Breast epithelium (tissue), 4 donors: ENCODE measurements at regions of chr4 and their contacts with region 1.

Region 1: DNA sequence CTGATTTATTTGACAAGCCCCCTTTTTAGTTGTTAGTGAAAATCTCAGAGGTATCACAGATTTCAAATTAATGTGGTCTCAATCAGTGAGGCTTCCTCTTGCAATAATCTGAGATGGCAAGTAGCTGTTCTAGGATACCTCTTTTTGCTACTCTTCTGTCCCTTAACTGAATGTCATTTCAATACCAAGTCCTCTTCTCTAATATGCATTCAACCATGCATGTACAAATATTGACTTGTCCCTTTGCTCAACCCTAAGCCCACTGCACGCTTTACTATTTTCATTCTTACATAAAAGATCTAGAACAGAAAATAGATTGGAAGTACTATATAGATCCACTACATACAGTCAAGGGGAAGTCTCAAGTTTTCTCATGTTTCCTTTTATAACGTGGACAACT is 164.2 kb downstream of the CBR4 start:
- DNase-seq: no peak
- H3K4me3 ChIP-seq: no peak overlapping the region
- H3K27ac ChIP-seq: peak overlapping the region; percentile 44 to 84
- H3K4me1 ChIP-seq: peaks cover 11 to 36% of the 10 kb centered on the region in 2 donors
- H3K27me3 ChIP-seq: no peaks in the 10 kb centered on the region
- CTCF ChIP-seq: no peak
- POLR2A ChIP-seq: no peak

Region 2: GRCh38 chr4:168815379-168816345 is 30.2 kb before region 1 on chr4:
- intact Hi-C with region 1: loop called (anchors 1 kb)
- DNase-seq: no peak
- H3K4me3 ChIP-seq: peak overlapping the region in 2 of 3 donors; percentile 6 to 23
- H3K27ac ChIP-seq: peak overlapping the region; percentile 86
- H3K4me1 ChIP-seq: peaks cover 3 to 7% of the 10 kb centered on the region in 2 donors
- H3K27me3 ChIP-seq: no peaks in the 10 kb centered on the region
- CTCF ChIP-seq: no peak
- POLR2A ChIP-seq: no peak